ENCODE measurements at regions of chrX and their contacts with region 1.

Region 1: DNA sequence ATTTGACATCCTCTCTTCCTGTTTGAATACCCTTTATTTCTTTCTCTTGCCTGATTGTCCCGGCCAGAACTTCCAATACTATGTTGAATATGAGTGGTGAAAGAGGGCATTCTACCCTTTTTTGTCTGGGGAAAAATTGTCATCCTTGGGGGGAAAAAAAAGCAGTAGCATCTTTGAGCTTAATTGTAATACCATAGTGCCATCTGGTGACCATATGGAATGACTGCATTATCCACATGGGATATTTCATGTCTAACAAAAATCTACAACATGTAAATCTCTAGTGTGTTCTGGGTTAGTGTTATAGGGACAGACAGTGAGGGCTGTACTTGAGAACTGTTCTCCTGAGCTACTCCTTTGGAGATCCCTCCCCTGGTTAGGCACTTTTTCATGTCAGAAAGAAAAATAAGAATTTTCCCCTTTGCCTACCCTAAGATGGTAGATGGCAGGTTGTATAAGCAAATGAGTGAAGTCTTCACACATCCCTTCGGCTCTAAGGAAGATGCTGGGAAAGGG is 26.0 kb downstream of the CAPN6 start:
- DNase-seq: no peak
- ATAC-seq: no peak
- H3K4me3 Mint-ChIP-seq: no peak overlapping the region
- H3K27ac Mint-ChIP-seq: no peak overlapping the region
- H3K4me1 Mint-ChIP-seq: no peaks in the 10 kb centered on the region
- H3K27me3 Mint-ChIP-seq: no peaks in the 10 kb centered on the region; the same call in none of the 2 replicates
- CTCF ChIP-seq: peak; percentile 26; the same call in 1 of the 2 replicates

Region 2: GRCh38 chrX:111168314-111168713 is 76.0 kb before region 1 on chrX:
- CTCF ChIA-PET with region 1: interaction called, 15 read pairs
- POLR2A ChIA-PET with region 1: no interaction called
- DNase-seq: peak; percentile 11
- ATAC-seq: peak; percentile 56
- H3K4me3 Mint-ChIP-seq: no peak overlapping the region
- H3K27ac Mint-ChIP-seq: no peak overlapping the region
- H3K4me1 Mint-ChIP-seq: no peaks in the 10 kb centered on the region
- H3K27me3 Mint-ChIP-seq: no peaks in the 10 kb centered on the region
- CTCF ChIP-seq: no peak

Region 3: DNA sequence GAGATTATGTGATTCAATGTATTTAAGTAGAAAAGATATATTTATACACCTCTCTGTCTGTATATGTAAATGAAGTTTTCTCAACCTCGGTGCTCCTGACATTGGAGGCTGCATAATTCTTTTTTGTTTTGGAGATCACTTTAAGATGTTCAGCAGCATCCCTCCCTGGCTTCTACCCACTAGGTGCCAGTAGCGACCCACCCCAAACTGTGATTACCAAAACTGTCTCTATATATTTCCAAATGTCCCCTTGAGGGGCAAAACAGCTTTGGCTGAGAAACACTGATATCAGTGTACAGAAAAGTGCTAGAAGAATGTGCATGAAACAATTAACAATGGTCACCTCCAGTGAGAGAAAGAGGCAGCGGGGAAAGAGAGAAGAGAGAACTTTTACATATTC is 116.5 kb after region 1 on chrX:
- CTCF ChIA-PET with region 1: no interaction called
- POLR2A ChIA-PET with region 1: no interaction called
- DNase-seq: peak; percentile 14
- ATAC-seq: peak; percentile 36; the same call in 1 of the 2 replicates
- H3K4me3 Mint-ChIP-seq: no peak overlapping the region
- H3K27ac Mint-ChIP-seq: no peak overlapping the region
- H3K4me1 Mint-ChIP-seq: no peaks in the 10 kb centered on the region
- H3K27me3 Mint-ChIP-seq: peaks cover 3% of the 10 kb centered on the region
- CTCF ChIP-seq: no peak

Region 4: GRCh38 chrX:111445486-111445885 is 201.2 kb after region 1 on chrX:
- CTCF ChIA-PET with region 1: interaction called, 10 read pairs
- POLR2A ChIA-PET with region 1: no interaction called
- DNase-seq: no peak
- ATAC-seq: no peak
- H3K4me3 Mint-ChIP-seq: no peak overlapping the region
- H3K27ac Mint-ChIP-seq: no peak overlapping the region
- H3K4me1 Mint-ChIP-seq: peaks cover 18% of the 10 kb centered on the region
- H3K27me3 Mint-ChIP-seq: no peaks in the 10 kb centered on the region
- CTCF ChIP-seq: peak; percentile 33; the same call in 1 of the 2 replicates